Aorta (tissue), 5 donors: ENCODE measurements at regions of chr5 and their contacts with region 1.

Region 1: GRCh38 chr5:119397518-119398380 is 41.9 kb downstream of the TNFAIP8 start:
- DNase-seq: no peak
- ATAC-seq: no peak
- H3K4me3 ChIP-seq: no peak overlapping the region
- H3K27ac ChIP-seq: no peak overlapping the region
- H3K4me1 ChIP-seq: no peaks in the 10 kb centered on the region
- H3K27me3 ChIP-seq: no peaks in the 10 kb centered on the region

Region 2: DNA sequence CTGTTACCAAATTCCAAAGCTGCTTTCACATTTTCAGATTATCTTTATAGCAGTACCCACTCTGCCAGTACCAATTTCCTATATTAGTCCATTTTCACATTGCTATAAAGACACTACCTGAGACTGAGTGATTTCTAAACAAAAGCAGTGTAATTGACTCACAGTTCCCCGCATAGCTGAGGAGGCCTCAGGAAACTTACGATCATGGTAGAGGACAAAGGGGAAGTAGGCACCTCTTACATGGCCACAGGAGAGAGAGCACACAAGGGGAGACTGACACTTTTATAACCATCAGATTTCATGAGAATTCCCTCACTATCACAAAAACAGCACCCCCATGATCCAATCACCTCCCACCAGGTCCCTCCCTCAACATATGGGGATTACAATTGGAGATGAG is 514.4 kb before region 1 on chr5:
- intact Hi-C with region 1: no loop called
- DNase-seq: no peak
- ATAC-seq: no peak
- H3K4me3 ChIP-seq: no peak overlapping the region
- H3K27ac ChIP-seq: no peak overlapping the region
- H3K4me1 ChIP-seq: no peaks in the 10 kb centered on the region
- H3K27me3 ChIP-seq: no peaks in the 10 kb centered on the region

Region 3: DNA sequence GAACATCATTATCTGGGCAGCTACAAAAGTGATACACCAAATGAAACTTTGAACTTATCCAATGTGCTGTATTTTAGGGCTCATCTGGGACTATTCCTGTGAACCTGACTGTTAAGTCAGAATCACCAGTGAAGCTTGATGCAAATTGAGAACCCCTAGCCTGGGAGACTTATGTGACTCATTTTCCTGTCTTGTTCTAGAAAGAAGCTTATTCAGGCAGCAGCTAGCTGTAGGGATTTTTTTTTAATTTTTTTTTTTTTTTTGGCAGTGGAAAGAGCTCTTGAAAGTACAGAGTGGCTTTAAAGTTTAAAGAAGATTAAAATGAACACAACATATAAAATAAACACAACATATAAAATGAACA is 123.0 kb before region 1 on chr5:
- intact Hi-C with region 1: loop called (anchors 10 kb)
- DNase-seq: no peak
- ATAC-seq: peak; percentile 57
- H3K4me3 ChIP-seq: no peak overlapping the region
- H3K27ac ChIP-seq: peak overlapping the region in 1 of 2 donors; percentile 28
- H3K4me1 ChIP-seq: peaks cover 2 to 9% of the 10 kb centered on the region in 2 donors
- H3K27me3 ChIP-seq: no peaks in the 10 kb centered on the region

Region 4: GRCh38 chr5:119355685-119356611 is 41.8 kb before region 1 on chr5 and contains the start of gene TNFAIP8:
- intact Hi-C with region 1: loop called in 1 of 2 experiments (anchors 5 kb)
- DNase-seq: peak; percentile 84 to 86
- ATAC-seq: peak; percentile 78
- H3K4me3 ChIP-seq: peak within 1 kb of the TSS; percentile 70 to 82
- H3K27ac ChIP-seq: peak within 1 kb of the TSS in 1 of 2 donors; percentile 22
- H3K4me1 ChIP-seq: peaks cover 0 to 5% of the 10 kb centered on the region in 2 donors
- H3K27me3 ChIP-seq: no peaks in the 10 kb centered on the region
- total RNA-seq, gene TNFAIP8: 17.8 to 26.9 TPM

Region 5: GRCh38 chr5:119478781-119479180 is 81.0 kb after region 1 on chr5:
- intact Hi-C with region 1: no loop called
- DNase-seq: no peak
- ATAC-seq: no peak
- H3K4me3 ChIP-seq: no peak overlapping the region
- H3K27ac ChIP-seq: no peak overlapping the region
- H3K4me1 ChIP-seq: peaks cover 0 to 3% of the 10 kb centered on the region in 2 donors
- H3K27me3 ChIP-seq: no peaks in the 10 kb centered on the region